PC-9 (cell line): ENCODE measurements at regions of chr2 and their contacts with region 1.

Region 1: GRCh38 chr2:20781656-20782265 is 41.1 kb downstream of the LDAH start:
- DNase-seq: no peak
- H3K4me3 ChIP-seq: no peak overlapping the region
- H3K27ac ChIP-seq: no peak overlapping the region
- H3K4me1 ChIP-seq: 0 out of 2 replicates have a peak, but pooled peaks cover 7% of the 10 kb centered on the region
- H3K27me3 ChIP-seq: no peaks in the 10 kb centered on the region
- CTCF ChIP-seq: peak; percentile 77

Region 2: DNA sequence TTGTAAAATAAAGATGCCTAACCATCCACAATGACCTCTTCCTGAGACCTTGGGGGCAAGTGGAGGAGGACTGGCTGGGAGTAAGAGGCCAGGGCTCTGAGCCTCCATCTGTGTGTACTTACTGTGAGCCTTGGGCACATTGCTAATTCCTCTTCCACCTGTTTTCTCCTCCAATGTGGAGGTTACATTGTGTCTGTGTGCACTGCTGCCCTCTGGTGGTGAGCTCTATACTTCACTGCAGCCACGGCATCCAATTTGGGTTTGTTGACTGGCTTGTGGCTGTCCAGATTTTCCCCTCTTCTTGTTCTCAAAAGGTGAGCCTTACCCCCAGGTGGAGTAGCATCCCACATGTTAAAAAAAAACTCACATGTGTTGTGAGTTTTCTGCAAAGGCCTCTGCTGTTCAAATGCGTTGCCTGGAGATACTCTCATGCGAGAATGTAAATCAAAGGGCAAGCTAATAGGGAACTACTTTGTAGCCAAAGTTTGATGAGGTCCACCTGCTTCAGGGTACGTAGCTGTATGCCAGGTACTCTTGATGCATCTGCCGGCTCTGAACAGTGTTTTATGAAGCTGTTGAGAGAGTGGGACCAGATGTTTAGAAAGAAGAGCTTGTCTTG is 181.3 kb after region 1 on chr2:
- CTCF ChIA-PET with region 1: no interaction called
- POLR2A ChIA-PET with region 1: no interaction called
- intact Hi-C with region 1: loop called (anchors 1 kb)
- DNase-seq: peak; percentile 57 to 59
- H3K4me3 ChIP-seq: no peak overlapping the region
- H3K27ac ChIP-seq: no peak overlapping the region
- H3K4me1 ChIP-seq: no peaks in the 10 kb centered on the region
- H3K27me3 ChIP-seq: peaks cover 88% of the 10 kb centered on the region
- CTCF ChIP-seq: peak; percentile 92